Calu3 (cell line): ENCODE measurements at regions of chr16 and their contacts with region 1.

Region 1: GRCh38 chr16:72367851-72368250 is 195.9 kb upstream of the PMFBP1 start:
- DNase-seq: no peak
- H3K4me3 Mint-ChIP-seq: no peak overlapping the region
- H3K27ac Mint-ChIP-seq: no peak overlapping the region
- H3K4me1 Mint-ChIP-seq: no peaks in the 10 kb centered on the region
- H3K27me3 Mint-ChIP-seq: no peaks in the 10 kb centered on the region
- CTCF ChIP-seq: no peak

Region 2: DNA sequence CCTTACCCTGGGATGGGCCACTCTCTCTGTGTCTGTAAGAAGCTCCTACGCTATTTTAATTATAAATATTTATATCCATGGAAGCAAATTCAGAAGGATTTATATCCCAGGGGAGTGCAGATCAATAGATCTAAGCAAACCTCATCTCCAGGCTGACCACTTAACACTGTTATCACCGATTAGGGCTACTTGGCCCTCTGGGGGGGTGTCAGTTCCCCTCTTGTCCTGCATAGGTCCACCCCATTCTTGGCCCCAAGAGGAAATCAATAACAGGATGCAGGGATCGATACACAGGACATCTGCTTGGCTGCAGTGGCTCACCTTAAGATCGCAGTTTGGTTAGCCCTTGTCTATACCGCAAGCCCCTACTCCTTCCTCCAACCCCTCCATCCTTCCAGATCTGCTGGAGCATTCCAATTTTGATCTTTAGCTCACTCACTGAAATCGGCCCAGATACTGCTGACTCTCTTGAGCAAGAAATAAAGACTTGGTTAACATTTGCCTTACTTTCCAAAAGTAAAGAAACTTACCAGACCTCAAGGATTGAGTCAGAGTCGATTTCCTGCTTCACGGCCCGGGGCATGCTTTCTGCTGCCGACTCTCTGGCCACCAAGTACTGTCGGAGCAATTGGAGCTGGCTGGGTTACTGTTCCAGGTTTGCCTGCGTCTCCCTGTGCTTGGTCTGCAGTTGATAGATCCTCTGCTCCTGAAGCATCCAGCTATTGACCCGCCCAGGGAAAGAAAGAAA is 83.6 kb before region 1 on chr16:
- CTCF ChIA-PET with region 1: no interaction called
- intact Hi-C with region 1: no loop called
- DNase-seq: no peak
- H3K4me3 Mint-ChIP-seq: no peak overlapping the region
- H3K27ac Mint-ChIP-seq: no peak overlapping the region
- H3K4me1 Mint-ChIP-seq: no peaks in the 10 kb centered on the region
- H3K27me3 Mint-ChIP-seq: no peaks in the 10 kb centered on the region
- CTCF ChIP-seq: no peak

Region 3: GRCh38 chr16:72409423-72409822 is 41.6 kb after region 1 on chr16:
- CTCF ChIA-PET with region 1: no interaction called
- intact Hi-C with region 1: no loop called
- DNase-seq: no peak
- H3K4me3 Mint-ChIP-seq: no peak overlapping the region
- H3K27ac Mint-ChIP-seq: no peak overlapping the region
- H3K4me1 Mint-ChIP-seq: no peaks in the 10 kb centered on the region
- H3K27me3 Mint-ChIP-seq: no peaks in the 10 kb centered on the region
- CTCF ChIP-seq: no peak

Region 4: GRCh38 chr16:72425571-72426341 is 57.9 kb after region 1 on chr16:
- CTCF ChIA-PET with region 1: no interaction called
- intact Hi-C with region 1: no loop called
- DNase-seq: no peak
- H3K4me3 Mint-ChIP-seq: no peak overlapping the region
- H3K27ac Mint-ChIP-seq: no peak overlapping the region
- H3K4me1 Mint-ChIP-seq: peaks cover 9% of the 10 kb centered on the region
- H3K27me3 Mint-ChIP-seq: no peaks in the 10 kb centered on the region
- CTCF ChIP-seq: no peak

Region 5: DNA sequence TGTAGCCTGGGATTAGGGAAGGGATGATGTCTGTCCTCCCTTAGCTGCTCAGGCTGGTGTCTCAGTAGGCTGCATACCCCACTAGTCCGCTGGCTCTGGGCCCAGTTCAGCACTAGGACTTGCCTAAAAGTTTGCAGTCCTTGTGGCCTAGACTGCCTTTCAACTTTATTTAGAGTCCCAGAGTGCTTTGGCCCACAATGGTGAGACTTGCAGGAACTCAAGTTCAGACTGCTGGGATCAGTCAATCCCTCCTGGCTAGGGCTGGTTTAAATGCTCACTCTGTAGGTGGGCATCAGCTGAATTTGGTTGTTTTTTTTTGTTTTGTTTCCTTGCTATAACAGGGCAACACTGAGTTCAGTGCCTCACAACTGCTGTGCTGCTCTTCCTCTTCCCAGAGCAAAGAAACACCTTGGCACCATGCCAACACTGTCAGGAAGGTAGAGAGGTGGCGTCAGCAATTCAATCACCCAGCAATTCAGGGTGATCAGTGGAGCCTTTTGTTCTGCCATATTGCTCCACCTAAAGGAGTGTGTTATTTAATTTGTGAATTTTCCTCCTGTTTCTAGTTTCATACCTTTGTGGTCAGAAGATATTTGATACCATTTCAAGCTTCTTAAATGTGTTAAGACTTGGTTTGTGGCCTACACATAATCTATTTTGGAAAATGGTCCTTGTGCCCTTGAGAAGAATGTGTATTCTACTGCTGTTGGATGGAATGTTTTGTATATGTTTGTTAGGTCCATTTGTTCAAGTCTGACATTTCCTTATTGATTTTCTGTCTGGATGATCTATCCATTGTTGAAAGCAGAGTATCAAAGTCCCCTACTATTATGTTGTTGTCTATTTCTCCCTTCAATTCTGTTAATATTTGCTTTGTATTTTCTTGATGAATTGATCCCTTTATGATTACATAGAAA is 88.2 kb after region 1 on chr16:
- CTCF ChIA-PET with region 1: no interaction called
- intact Hi-C with region 1: no loop called
- DNase-seq: peak; percentile 83
- H3K4me3 Mint-ChIP-seq: no peak overlapping the region
- H3K27ac Mint-ChIP-seq: no peak overlapping the region
- H3K4me1 Mint-ChIP-seq: peaks cover 8% of the 10 kb centered on the region
- H3K27me3 Mint-ChIP-seq: no peaks in the 10 kb centered on the region
- CTCF ChIP-seq: no peak

Region 6: GRCh38 chr16:73268366-73268993 is 900.6 kb after region 1 on chr16:
- CTCF ChIA-PET with region 1: interaction called, 13 read pairs
- intact Hi-C with region 1: no loop called
- DNase-seq: no peak
- H3K4me3 Mint-ChIP-seq: no peak overlapping the region
- H3K27ac Mint-ChIP-seq: no peak overlapping the region
- H3K4me1 Mint-ChIP-seq: peaks cover 11% of the 10 kb centered on the region
- H3K27me3 Mint-ChIP-seq: no peaks in the 10 kb centered on the region
- CTCF ChIP-seq: peak; percentile 15